Activated T-helper 1 cell treated with anti-CD3 and anti-CD28 coated beads, Interleukin-12 subunit alpha, Interleukin-12 subunit beta, Interleukin-2, Interleukin-4 antibody, amounts not matched to agents 30 ng/mL and 10 ng/mL and 1 ng/mL, durations not matched to agents 14 hours and 24 hours and 36 hours (primary cell): ENCODE measurements at regions of chr19 and their contacts with region 1.

Region 1: DNA sequence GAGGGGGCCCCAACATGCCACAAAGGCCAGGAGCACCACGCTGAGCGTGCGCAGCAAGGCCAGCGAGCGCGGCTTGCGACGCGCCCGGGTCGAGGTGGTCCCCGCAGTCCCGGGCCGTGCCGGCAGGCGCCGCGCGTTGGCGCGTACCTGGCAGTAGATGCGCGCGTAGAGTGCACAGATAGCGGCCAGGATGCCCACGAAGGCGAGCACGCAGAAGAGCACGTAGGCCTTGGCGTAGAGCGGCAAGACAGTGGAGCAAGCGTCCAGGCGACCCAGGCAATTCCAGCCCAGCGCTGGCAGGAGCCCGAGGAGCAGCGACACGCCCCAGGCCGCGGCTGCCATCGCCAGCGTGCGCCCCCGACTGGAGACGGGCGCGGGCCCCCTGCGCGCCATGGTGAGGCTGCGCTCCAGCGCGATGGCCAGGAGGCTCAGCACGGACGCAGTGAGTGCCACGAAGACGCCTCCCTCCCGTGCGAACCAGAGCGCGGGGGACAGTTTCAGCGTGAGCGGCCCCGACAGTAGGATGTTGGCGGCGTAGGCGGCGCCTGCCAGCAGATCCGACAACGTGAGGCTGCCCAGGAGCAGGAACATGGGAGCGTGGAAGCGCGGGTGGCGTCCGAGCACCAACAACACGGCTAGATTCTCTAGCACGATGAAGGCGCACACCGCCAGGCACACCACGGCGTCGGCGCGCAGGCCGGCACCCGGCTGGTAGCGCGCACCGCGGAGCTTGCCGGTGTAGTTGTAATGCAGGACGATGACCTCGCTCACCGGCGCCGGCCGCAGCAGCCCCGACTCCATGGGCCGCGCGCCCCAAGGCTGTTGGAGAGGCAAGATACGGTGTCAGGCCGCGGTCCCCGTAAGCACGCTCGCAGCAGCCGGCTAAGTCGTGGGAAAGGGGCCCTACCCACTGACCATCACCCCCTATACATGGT is 2.8 kb downstream of the S1PR5 start:
- DNase-seq: no peak
- H3K4me3 Mint-ChIP-seq: no peak overlapping the region
- H3K27ac Mint-ChIP-seq: no peak overlapping the region
- H3K4me1 Mint-ChIP-seq: peaks cover 21% of the 10 kb centered on the region
- H3K27me3 Mint-ChIP-seq: peaks cover 61% of the 10 kb centered on the region

Region 2: DNA sequence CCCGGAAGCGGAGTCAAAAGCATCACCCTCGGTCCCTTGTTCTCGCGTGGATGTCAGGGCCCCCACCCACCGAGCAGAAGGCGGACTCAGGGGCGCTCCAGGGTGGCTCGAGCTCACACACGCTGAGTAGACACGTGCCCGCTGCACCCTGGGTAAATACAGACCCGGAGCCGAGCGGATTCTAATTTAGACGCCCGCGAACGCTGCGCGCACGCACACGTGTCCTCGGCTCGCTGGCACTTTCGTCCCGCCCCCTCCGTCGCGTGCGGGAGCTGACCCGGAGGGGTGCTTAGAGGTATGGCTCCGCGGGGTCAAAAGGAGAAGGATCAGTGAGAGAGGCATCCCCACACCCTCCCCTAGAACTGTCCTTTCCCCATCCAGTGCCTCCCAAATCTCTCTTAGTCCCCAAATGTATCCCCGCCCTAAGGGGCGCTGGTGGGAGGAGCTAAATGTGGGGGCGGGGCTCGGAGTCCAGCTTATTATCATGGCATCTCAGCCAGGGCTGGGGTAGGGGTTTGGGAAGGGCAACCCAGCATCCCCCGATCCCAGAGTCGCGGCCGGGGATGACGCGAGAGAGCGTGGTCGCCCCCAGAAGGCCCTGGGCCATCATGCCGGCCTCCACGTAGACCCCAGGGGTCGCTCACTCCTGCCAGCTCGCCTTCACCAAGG is 225.2 kb before region 1 on chr19:
- intact Hi-C with region 1: loop called (anchors 2 kb)
- DNase-seq: peak; percentile 42
- H3K4me3 Mint-ChIP-seq: peak overlapping the region; percentile 79
- H3K27ac Mint-ChIP-seq: peak overlapping the region; percentile 58
- H3K4me1 Mint-ChIP-seq: peaks cover 67% of the 10 kb centered on the region
- H3K27me3 Mint-ChIP-seq: peaks cover 53% of the 10 kb centered on the region

Region 3: GRCh38 chr19:11035441-11036377 is 521.2 kb after region 1 on chr19:
- intact Hi-C with region 1: no loop called
- DNase-seq: peak; percentile 74
- H3K4me3 Mint-ChIP-seq: no peak overlapping the region
- H3K27ac Mint-ChIP-seq: no peak overlapping the region
- H3K4me1 Mint-ChIP-seq: no peaks in the 10 kb centered on the region
- H3K27me3 Mint-ChIP-seq: no peaks in the 10 kb centered on the region